Panc1 (cell line): ENCODE measurements at regions of chr17 and their contacts with region 1.

Region 1: GRCh38 chr17:75364078-75364477 is 41.4 kb downstream of the GRB2 start:
- DNase-seq: peak; percentile 48
- ATAC-seq: peak; percentile 68
- H3K4me3 ChIP-seq: no peak overlapping the region
- H3K27ac ChIP-seq: no peak overlapping the region
- H3K4me1 ChIP-seq: peaks cover 74% of the 10 kb centered on the region
- H3K27me3 ChIP-seq: no peaks in the 10 kb centered on the region
- CTCF ChIP-seq: no peak

Region 2: GRCh38 chr17:75350706-75351105 is 13.4 kb before region 1 on chr17:
- CTCF ChIA-PET with region 1: interaction called, 10 read pairs
- POLR2A ChIA-PET with region 1: interaction called, 5 read pairs
- in situ Hi-C with region 1: no loop called
- intact Hi-C with region 1: no loop called
- DNase-seq: no peak
- ATAC-seq: no peak
- H3K4me3 ChIP-seq: no peak overlapping the region
- H3K27ac ChIP-seq: no peak overlapping the region
- H3K4me1 ChIP-seq: peaks cover 4% of the 10 kb centered on the region; the same call in 1 of the 2 replicates
- H3K27me3 ChIP-seq: no peaks in the 10 kb centered on the region
- CTCF ChIP-seq: no peak

Region 3: GRCh38 chr17:75380315-75380714 is 16.2 kb after region 1 on chr17:
- CTCF ChIA-PET with region 1: no interaction called
- POLR2A ChIA-PET with region 1: interaction called, 10 read pairs
- in situ Hi-C with region 1: no loop called
- intact Hi-C with region 1: no loop called
- DNase-seq: no peak
- ATAC-seq: no peak
- H3K4me3 ChIP-seq: no peak overlapping the region
- H3K27ac ChIP-seq: no peak overlapping the region
- H3K4me1 ChIP-seq: peaks cover 16% of the 10 kb centered on the region; the same call in 1 of the 2 replicates
- H3K27me3 ChIP-seq: no peaks in the 10 kb centered on the region
- CTCF ChIP-seq: no peak

Region 4: DNA sequence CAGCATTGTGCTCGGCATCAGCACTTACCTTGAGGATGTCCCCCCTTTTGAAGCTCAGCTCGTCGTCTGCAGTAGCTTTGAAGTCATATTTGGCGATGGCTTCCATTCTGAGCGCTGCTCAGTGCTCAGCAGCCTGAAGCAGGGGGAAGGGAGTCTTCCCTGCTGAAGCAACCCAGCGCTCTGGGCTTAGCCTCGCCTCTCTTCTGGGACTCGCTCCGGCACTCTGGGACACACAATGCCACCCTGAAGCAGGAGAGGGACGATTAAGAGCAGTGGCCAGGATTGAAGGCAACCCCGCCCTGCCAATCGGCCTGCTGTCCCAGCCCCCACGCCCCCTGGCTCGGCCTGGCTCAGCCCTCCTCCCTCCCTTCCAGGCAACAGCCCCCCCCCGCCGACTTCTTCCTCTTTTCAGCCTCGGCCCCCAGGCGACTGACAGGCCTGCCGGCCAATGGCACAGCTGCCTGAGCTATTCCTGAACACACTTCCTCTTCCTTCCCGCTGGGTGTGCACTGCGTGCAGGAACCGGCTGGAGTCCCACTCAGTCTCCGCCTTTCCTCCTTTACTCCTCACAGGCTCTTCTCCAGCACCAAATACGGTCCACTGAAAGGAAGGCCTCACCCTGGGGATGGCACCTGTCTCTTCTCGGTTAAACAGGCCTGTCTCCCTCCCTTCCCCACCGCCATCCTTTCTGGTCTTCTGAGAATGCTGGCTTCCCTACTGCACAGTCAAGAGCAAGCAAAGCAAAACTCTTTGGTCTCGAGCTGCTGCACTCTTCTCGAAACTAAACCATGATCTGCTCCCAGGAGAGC is 29.6 kb after region 1 on chr17:
- CTCF ChIA-PET with region 1: no interaction called
- POLR2A ChIA-PET with region 1: interaction called, 10 read pairs
- in situ Hi-C with region 1: no loop called
- intact Hi-C with region 1: no loop called
- DNase-seq: peak; percentile 77
- ATAC-seq: peak; percentile 99
- H3K4me3 ChIP-seq: peak overlapping the region; percentile 74 to 82
- H3K27ac ChIP-seq: peak overlapping the region; percentile 93
- H3K4me1 ChIP-seq: peaks cover 47% of the 10 kb centered on the region
- H3K27me3 ChIP-seq: no peaks in the 10 kb centered on the region
- CTCF ChIP-seq: no peak

Region 5: GRCh38 chr17:75416006-75416405 is 51.9 kb after region 1 on chr17:
- CTCF ChIA-PET with region 1: interaction called, 11 read pairs
- POLR2A ChIA-PET with region 1: no interaction called
- in situ Hi-C with region 1: no loop called
- intact Hi-C with region 1: no loop called
- DNase-seq: no peak
- ATAC-seq: no peak
- H3K4me3 ChIP-seq: no peak overlapping the region
- H3K27ac ChIP-seq: no peak overlapping the region
- H3K4me1 ChIP-seq: peaks cover 3% of the 10 kb centered on the region; the same call in 1 of the 2 replicates
- H3K27me3 ChIP-seq: no peaks in the 10 kb centered on the region
- CTCF ChIP-seq: no peak

Region 6: DNA sequence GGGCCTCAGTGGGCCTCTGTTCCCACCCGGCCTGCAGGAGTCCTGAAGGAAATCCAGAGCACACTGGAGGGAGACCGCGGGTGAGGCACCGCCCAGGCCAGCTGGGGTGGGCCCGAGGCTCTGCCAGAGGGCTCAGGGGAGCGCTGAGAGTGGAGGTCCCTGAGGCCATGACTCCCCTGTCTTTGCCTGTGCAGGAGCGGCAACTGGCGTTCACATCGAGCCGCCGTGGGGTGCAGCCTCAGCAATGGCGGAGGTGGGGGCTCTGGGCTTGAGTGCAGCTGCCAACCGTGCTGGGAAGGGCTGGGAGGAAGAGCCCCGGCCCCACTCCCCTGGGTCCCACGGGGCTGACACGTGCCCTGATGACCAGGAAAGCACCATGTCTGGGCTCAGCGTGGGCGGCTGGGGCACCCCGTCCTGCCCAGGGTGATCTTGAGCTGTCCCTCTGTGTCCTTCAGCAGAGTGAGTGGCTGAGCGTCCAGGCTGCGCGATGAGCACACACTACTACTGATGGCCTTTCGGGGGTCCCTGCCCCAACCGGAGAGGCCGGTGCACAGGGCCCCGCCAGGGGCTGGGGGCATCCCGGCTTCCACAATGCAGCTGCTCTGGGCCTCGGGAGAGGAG is 210.4 kb after region 1 on chr17:
- CTCF ChIA-PET with region 1: no interaction called
- POLR2A ChIA-PET with region 1: no interaction called
- in situ Hi-C with region 1: no loop called
- intact Hi-C with region 1: no loop called
- DNase-seq: no peak
- ATAC-seq: no peak
- H3K4me3 ChIP-seq: no peak overlapping the region
- H3K27ac ChIP-seq: no peak overlapping the region
- H3K4me1 ChIP-seq: no peaks in the 10 kb centered on the region
- H3K27me3 ChIP-seq: no peaks in the 10 kb centered on the region
- CTCF ChIP-seq: no peak